ENCODE measurements at regions of chr13 and their contacts with region 1.

Region 1: DNA sequence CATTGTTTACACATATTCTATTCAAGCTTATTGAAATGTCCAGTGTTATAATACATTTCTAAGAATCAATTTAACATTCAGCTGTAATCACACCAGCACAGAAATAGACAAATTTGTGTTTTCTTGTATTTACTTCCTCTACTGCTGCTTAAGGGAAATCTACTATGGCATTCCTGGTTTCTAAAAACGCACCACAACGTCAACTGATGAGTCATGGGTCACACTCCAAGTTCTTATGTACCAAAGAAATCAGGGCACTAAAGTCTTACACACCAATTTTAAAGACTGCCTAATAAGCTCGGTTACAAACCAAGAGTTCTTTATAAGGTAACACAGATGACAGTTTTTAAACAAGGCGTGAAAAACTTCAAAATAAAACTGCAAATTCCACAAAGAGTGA is 13.2 kb downstream of the LNX2 start:
- DNase-seq: no peak
- CTCF ChIP-seq: no peak

Region 2: DNA sequence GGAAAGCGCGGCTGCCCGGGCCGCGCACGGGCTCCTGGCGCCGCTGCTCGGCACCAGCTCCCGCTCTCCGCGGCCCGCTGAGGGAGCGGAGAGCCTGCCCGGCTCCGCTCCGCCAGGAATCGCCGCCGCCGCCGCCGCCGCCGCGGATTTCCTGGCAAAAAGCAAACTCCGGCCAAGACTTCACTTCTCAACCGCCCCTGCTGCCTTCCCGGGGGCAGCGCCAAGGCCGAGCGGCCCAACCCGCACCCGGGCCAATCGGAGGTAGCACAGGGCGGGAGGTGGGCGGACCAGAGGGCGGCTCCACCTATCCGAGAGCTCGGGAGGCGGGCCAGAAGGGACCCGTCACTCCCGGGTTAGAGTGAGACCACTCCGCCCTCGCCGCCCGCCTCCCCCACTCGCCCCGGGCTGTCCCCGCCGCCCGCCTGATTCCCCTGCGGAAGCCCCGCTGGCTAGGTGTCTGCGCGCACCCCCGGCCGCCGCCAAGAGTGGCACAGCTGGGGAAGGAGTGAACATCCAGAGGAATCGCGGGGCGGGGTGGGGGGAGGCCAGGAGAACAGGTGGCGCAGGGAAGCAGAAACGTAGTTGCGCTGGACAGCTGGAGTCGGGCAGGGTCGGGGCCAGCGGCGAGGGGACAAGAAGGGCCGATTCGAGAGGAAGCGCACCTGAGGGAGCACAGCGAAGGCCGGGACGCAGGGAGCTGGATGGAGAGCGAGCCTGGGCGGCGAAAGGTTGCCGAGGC is 13.4 kb after region 1 on chr13 and contains the start of gene LNX2:
- CTCF ChIA-PET with region 1: interaction called, 10 read pairs
- POLR2A ChIA-PET with region 1: no interaction called
- DNase-seq: peak; percentile 98
- CTCF ChIP-seq: no peak

Measured in GM10248 (cell line).